ENCODE measurements at regions of chr3 and their contacts with region 1.

Region 1: DNA sequence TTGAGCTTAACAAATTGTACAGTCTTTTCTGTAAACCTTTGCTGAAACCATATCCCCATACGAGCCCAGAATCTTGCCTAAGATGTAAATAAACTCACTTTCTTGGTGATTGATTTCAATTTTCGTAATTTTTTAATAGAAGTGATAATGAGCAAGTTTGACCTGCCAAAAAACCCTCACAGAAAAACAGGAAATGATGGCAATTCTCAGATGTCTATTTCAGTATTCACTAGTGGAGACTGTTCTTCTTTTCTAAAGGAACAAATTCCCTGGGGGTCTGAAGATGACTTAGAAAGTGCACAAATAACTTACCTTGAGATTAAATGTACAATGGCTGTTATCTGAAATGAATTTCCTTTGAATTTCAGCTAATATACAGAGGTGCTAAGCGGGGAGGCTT is 116.5 kb upstream of the CMC1 start:
- DNase-seq: peak; percentile 7
- H3K4me3 ChIP-seq: no peak overlapping the region
- H3K27ac ChIP-seq: no peak overlapping the region
- H3K4me1 ChIP-seq: peaks cover 6% of the 10 kb centered on the region
- CTCF ChIP-seq: no peak

Region 2: DNA sequence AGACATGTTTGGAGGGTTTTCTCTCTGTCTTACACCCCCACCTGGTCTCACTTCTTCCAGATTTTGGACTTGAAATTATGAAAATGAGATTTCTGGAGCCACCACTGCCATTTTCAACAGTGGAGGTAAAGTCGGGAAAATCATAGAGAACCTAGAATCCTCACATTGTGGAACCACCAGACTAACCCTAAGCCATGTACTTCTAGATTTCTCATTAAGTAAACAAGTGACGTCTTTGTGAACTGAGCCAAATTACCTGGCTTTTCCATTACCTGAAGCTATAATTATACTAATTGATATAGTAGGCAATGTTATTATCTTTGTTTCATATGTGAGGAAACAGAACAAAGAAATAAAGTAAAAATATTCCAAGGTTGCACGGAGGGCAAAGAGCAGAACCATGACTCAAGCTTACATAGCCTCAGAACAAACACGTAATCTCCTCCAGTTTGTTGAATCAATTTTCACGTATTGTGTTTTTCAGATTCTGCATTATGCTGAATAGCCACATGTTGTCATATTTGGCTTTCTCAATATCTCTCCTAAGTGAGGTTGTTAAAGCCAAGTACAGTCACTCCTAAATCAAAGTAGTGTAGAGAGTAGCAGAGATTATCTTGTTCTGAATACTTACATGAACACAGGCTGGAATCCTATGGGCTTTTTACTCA is 15.2 kb after region 1 on chr3:
- CTCF ChIA-PET with region 1: no interaction called
- POLR2A ChIA-PET with region 1: interaction called, 19 read pairs
- intact Hi-C with region 1: no loop called
- DNase-seq: no peak
- H3K4me3 ChIP-seq: no peak overlapping the region
- H3K27ac ChIP-seq: no peak overlapping the region
- H3K4me1 ChIP-seq: no peaks in the 10 kb centered on the region
- CTCF ChIP-seq: no peak

Region 3: DNA sequence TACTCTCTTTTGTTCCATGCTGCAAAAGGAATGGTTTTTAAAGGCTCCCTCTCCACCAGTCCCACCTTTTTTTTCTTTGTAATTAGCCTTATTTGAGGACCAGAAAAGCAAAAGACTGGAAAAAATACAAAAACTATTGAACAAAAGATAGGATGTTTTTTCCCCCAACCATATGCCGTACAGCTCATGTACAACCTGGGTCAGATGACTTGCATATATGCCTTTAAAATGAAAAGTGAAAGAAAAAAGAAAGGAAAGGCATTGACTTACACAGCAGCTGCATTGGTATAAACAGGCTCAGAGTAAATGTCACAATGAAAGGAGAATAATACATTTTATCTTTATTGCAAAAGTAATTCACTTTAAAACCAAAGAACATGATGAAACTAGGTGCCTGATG is 47.1 kb after region 1 on chr3:
- CTCF ChIA-PET with region 1: no interaction called
- POLR2A ChIA-PET with region 1: no interaction called
- intact Hi-C with region 1: no loop called
- DNase-seq: no peak
- H3K4me3 ChIP-seq: no peak overlapping the region
- H3K27ac ChIP-seq: no peak overlapping the region
- H3K4me1 ChIP-seq: no peaks in the 10 kb centered on the region
- CTCF ChIP-seq: no peak

Region 4: DNA sequence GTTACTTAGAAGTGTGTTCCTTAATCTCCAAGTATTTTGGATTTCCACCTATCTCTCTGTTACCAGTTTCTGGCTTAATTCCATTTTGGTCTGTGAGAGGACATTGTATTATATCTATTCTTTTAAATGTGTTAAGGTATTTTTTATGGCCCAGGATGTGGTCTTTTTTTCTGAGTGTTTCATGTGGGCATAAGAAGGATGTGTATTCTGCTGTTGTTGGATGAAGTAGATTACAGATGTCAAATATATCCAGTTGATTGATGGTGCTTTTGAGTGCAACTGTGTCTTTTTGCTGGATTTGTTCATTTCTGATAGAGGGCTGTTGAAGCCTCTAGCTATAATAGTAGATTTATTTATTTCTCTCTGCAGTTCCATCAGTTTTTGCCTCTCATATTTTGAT is 360.3 kb after region 1 on chr3:
- CTCF ChIA-PET with region 1: no interaction called
- POLR2A ChIA-PET with region 1: no interaction called
- intact Hi-C with region 1: no loop called
- DNase-seq: no peak
- H3K4me3 ChIP-seq: no peak overlapping the region
- H3K27ac ChIP-seq: no peak overlapping the region
- H3K4me1 ChIP-seq: no peaks in the 10 kb centered on the region
- CTCF ChIP-seq: no peak

Measured in OCI-LY7 (cell line).